Caco-2 (cell line): ENCODE measurements at regions of chr14 and their contacts with region 1.

Region 1: DNA sequence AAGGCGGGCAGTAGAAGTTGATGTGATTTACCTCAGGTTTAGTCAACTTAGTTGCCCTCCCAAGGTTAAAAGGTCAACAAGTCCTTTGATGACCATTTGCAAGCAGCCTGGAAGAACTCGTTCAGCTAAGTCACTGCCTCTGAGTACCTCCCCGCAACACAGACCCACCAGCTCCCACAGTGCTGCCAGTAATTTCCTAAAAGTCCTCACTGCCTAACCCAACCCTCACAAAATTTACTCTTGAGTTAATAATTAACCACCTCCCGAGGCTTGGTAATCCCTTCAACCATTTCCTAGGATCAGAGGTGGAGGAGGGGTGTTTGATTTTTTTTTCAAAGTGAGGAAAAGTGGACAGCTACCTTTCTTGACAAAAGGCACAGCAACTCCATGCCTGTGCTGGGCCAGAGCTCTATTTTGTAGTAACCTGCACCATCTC is 55.8 kb downstream of the MAP3K9 start:
- DNase-seq: peak; percentile 91 to 94
- H3K4me3 ChIP-seq: no peak overlapping the region
- H3K4me3 Mint-ChIP-seq: peak overlapping the region; percentile 53
- H3K27ac Mint-ChIP-seq: peak overlapping the region; percentile 84
- H3K4me1 ChIP-seq: peaks cover 41% of the 10 kb centered on the region
- H3K4me1 Mint-ChIP-seq: peaks cover 26% of the 10 kb centered on the region
- H3K27me3 ChIP-seq: no peaks in the 10 kb centered on the region
- H3K27me3 Mint-ChIP-seq: no peaks in the 10 kb centered on the region
- CTCF ChIP-seq: no peak

Region 2: DNA sequence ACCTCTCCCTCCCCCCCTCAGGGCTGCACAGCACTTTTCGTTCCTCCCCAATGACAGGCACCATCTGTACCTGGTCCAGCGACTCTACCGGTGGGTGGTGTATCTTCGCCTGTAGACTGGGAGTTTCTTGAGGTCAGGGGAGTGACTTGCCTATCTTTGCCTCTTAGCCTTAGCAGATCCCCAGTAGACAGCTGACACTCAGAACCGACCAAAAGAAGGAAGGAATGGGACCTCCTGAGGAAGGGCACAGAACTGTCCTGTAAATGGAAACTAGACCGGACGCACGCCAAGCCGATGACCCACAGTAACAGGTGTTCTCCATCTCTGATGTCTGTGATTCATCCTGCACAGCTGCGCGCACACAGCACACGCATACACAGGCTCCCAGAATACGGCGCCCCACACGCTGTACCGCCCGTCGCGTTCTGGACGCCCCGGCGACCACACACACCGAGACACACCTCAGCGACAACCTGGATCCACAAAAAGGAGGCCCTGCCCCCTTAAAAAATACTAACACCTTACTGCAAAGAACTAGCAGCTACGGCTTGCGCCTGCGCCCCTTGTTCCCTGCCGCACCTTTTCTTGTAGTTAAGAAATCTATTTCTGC is 112.5 kb before region 1 on chr14:
- CTCF ChIA-PET with region 1: no interaction called
- POLR2A ChIA-PET with region 1: no interaction called
- intact Hi-C with region 1: loop called (anchors 1 kb)
- DNase-seq: peak in 1 of 2 experiments; percentile 45
- H3K4me3 ChIP-seq: peak overlapping the region; percentile 84
- H3K4me3 Mint-ChIP-seq: peak overlapping the region; percentile 91
- H3K27ac Mint-ChIP-seq: peak overlapping the region; percentile 37
- H3K4me1 ChIP-seq: peaks cover 6% of the 10 kb centered on the region; the same call in 1 of the 2 replicates
- H3K4me1 Mint-ChIP-seq: peaks cover 13% of the 10 kb centered on the region
- H3K27me3 ChIP-seq: no peaks in the 10 kb centered on the region
- H3K27me3 Mint-ChIP-seq: peaks cover 4% of the 10 kb centered on the region
- CTCF ChIP-seq: no peak

Region 3: GRCh38 chr14:70809543-70810244 is 56.2 kb after region 1 on chr14:
- CTCF ChIA-PET with region 1: interaction called, 9 read pairs
- POLR2A ChIA-PET with region 1: interaction called, 9 read pairs
- intact Hi-C with region 1: loop called (anchors 1 kb)
- DNase-seq: peak; percentile 99
- H3K4me3 ChIP-seq: peak overlapping the region; percentile 96
- H3K4me3 Mint-ChIP-seq: no peak overlapping the region
- H3K27ac Mint-ChIP-seq: no peak overlapping the region
- H3K4me1 ChIP-seq: peaks cover 27% of the 10 kb centered on the region
- H3K4me1 Mint-ChIP-seq: peaks cover 6% of the 10 kb centered on the region
- H3K27me3 ChIP-seq: no peaks in the 10 kb centered on the region
- H3K27me3 Mint-ChIP-seq: no peaks in the 10 kb centered on the region
- CTCF ChIP-seq: no peak

Region 4: GRCh38 chr14:70816525-70816924 is 63.0 kb after region 1 on chr14:
- CTCF ChIA-PET with region 1: no interaction called
- POLR2A ChIA-PET with region 1: no interaction called
- intact Hi-C with region 1: loop called (anchors 2 kb)
- DNase-seq: no peak
- H3K4me3 ChIP-seq: no peak overlapping the region
- H3K4me3 Mint-ChIP-seq: no peak overlapping the region
- H3K27ac Mint-ChIP-seq: no peak overlapping the region
- H3K4me1 ChIP-seq: peaks cover 19% of the 10 kb centered on the region
- H3K4me1 Mint-ChIP-seq: no peaks in the 10 kb centered on the region
- H3K27me3 ChIP-seq: no peaks in the 10 kb centered on the region
- H3K27me3 Mint-ChIP-seq: no peaks in the 10 kb centered on the region
- CTCF ChIP-seq: no peak

Region 5: GRCh38 chr14:70955543-70956480 is 202.3 kb after region 1 on chr14:
- CTCF ChIA-PET with region 1: no interaction called
- POLR2A ChIA-PET with region 1: interaction called, 11 read pairs
- intact Hi-C with region 1: no loop called
- DNase-seq: peak in 1 of 2 experiments; percentile 39
- H3K4me3 ChIP-seq: no peak overlapping the region
- H3K4me3 Mint-ChIP-seq: no peak overlapping the region
- H3K27ac Mint-ChIP-seq: no peak overlapping the region
- H3K4me1 ChIP-seq: no peaks in the 10 kb centered on the region
- H3K4me1 Mint-ChIP-seq: no peaks in the 10 kb centered on the region
- H3K27me3 ChIP-seq: no peaks in the 10 kb centered on the region
- H3K27me3 Mint-ChIP-seq: no peaks in the 10 kb centered on the region
- CTCF ChIP-seq: peak; percentile 40 to 65